ENCODE measurements at regions of chrX and their contacts with region 1.

Region 1: GRCh38 chrX:27186664-27187063 is 276.5 kb downstream of the PPP4R3C start:
- ATAC-seq: peak in 1 of 8 experiments; percentile 37
- H3K4me3 ChIP-seq: no peak overlapping the region
- H3K27ac ChIP-seq: no peak overlapping the region
- H3K4me1 ChIP-seq: no peaks in the 10 kb centered on the region

Region 2: GRCh38 chrX:26783512-26784225 is 403.0 kb before region 1 on chrX:
- in situ Hi-C with region 1: loop called in 1 of 9 experiments (anchors 25 kb)
- ATAC-seq: peak in 2 of 8 experiments; percentile 30 to 47
- H3K4me3 ChIP-seq: no peak overlapping the region
- H3K27ac ChIP-seq: no peak overlapping the region
- H3K4me1 ChIP-seq: no peaks in the 10 kb centered on the region

Region 3: DNA sequence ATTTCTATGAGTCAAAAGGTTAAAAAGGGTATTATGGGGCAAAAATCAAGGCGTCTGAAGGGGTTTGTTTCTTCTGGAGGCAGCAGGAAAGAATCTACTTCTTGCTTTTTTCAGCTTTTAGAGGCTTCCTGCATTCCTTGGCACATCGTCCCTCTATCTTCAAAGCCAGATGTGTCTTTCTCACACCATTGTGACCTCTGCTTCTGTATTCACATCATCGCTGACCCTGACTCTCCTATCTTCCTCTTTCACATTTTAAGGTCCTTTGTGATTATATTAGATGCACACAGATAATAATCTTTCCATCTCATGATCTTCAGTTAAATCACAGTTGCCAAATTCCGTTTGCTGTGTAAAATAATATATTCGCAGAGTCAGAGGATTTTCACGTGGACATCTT is 163.8 kb after region 1 on chrX:
- in situ Hi-C with region 1: no loop called
- ATAC-seq: no peak
- H3K4me3 ChIP-seq: no peak overlapping the region
- H3K27ac ChIP-seq: no peak overlapping the region
- H3K4me1 ChIP-seq: no peaks in the 10 kb centered on the region

Measured in motor neuron (in vitro differentiated cells).